ENCODE measurements at regions of chr14 and their contacts with region 1.

Region 1: GRCh38 chr14:96424109-96424989 is 32.4 kb downstream of the AK7 start:
- DNase-seq: peak in 6 of 9 experiments; percentile 13 to 76 (median 38)
- ATAC-seq: peak; percentile 84
- H3K4me3 ChIP-seq: peak overlapping the region; percentile 36 to 38
- H3K4me3 Mint-ChIP-seq: peak overlapping the region; percentile 84
- H3K27ac ChIP-seq: no peak overlapping the region
- H3K27ac Mint-ChIP-seq: no peak overlapping the region
- H3K4me1 ChIP-seq: no peaks in the 10 kb centered on the region
- H3K4me1 Mint-ChIP-seq: peaks cover 3% of the 10 kb centered on the region
- H3K27me3 ChIP-seq: no peaks in the 10 kb centered on the region
- H3K27me3 Mint-ChIP-seq: peaks cover 2% of the 10 kb centered on the region
- CTCF ChIP-seq: peak; percentile 88

Region 2: GRCh38 chr14:95561001-95561412 is 863.3 kb before region 1 on chr14:
- CTCF ChIA-PET with region 1: no interaction called
- POLR2A ChIA-PET with region 1: no interaction called
- intact Hi-C with region 1: loop called in 1 of 2 experiments (anchors 10 kb)
- DNase-seq: peak; percentile 62 to 88 (median 84)
- ATAC-seq: peak; percentile 88
- H3K4me3 ChIP-seq: no peak overlapping the region
- H3K4me3 Mint-ChIP-seq: no peak overlapping the region
- H3K27ac ChIP-seq: no peak overlapping the region
- H3K27ac Mint-ChIP-seq: no peak overlapping the region
- H3K4me1 ChIP-seq: no peaks in the 10 kb centered on the region
- H3K4me1 Mint-ChIP-seq: peaks cover 4% of the 10 kb centered on the region
- H3K27me3 ChIP-seq: no peaks in the 10 kb centered on the region
- H3K27me3 Mint-ChIP-seq: peaks cover 5% of the 10 kb centered on the region
- CTCF ChIP-seq: peak; percentile 86

Region 3: GRCh38 chr14:95850417-95850816 is 573.9 kb before region 1 on chr14:
- CTCF ChIA-PET with region 1: no interaction called
- POLR2A ChIA-PET with region 1: no interaction called
- intact Hi-C with region 1: no loop called
- DNase-seq: no peak
- ATAC-seq: no peak
- H3K4me3 ChIP-seq: no peak overlapping the region
- H3K4me3 Mint-ChIP-seq: no peak overlapping the region
- H3K27ac ChIP-seq: no peak overlapping the region
- H3K27ac Mint-ChIP-seq: no peak overlapping the region
- H3K4me1 ChIP-seq: no peaks in the 10 kb centered on the region
- H3K4me1 Mint-ChIP-seq: no peaks in the 10 kb centered on the region
- H3K27me3 ChIP-seq: no peaks in the 10 kb centered on the region
- H3K27me3 Mint-ChIP-seq: peaks cover 26% of the 10 kb centered on the region
- CTCF ChIP-seq: no peak

Region 4: DNA sequence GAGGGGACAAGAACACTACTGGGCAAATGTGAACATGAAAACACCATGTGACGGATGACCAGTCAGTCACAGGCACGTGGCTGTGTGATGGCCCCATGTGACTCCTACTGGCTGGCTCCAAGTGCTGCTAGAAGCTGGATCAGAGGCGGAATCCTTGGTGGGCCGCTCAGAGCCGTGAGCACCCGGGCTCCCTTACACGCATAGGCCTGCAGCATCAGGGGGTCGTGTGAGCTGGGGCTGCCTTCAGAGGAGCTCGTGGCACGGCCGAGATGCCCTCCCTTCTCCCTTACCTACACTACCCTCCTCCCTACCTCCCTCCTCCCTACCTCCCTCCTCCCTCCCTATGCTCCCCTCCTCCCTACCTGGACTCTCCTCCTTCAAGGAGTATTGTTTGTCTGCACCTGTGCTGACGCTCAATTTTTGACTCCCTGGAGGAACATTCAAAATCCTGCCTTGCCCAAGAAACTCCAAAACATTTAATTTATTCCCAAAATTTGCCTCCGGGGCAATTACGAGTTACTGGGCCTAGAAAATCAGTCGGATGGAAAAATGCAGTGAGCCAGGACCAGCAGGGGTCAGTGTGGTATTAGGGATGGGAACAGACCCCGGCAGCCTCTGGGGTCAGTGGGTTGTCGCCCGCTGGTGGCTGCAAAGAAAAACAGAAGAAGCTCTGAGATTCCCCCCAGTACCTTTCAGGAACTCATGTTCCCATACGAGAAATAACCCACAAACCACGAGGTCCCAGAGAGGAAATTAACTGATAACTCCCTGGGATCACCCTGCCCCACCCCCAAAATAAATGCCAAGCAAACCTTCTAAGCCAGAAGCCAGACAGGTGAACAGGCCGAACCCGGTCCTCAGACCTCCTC is 324.0 kb before region 1 on chr14:
- CTCF ChIA-PET with region 1: interaction called, 3 read pairs
- POLR2A ChIA-PET with region 1: no interaction called
- intact Hi-C with region 1: loop called in 1 of 2 experiments (anchors 1 kb)
- DNase-seq: peak; percentile 44 to 79 (median 66)
- ATAC-seq: peak; percentile 46
- H3K4me3 ChIP-seq: no peak overlapping the region
- H3K4me3 Mint-ChIP-seq: no peak overlapping the region
- H3K27ac ChIP-seq: no peak overlapping the region
- H3K27ac Mint-ChIP-seq: no peak overlapping the region
- H3K4me1 ChIP-seq: no peaks in the 10 kb centered on the region
- H3K4me1 Mint-ChIP-seq: no peaks in the 10 kb centered on the region
- H3K27me3 ChIP-seq: no peaks in the 10 kb centered on the region
- H3K27me3 Mint-ChIP-seq: peaks cover 3% of the 10 kb centered on the region
- CTCF ChIP-seq: peak; percentile 73

Region 5: GRCh38 chr14:96167224-96168148 is 256.9 kb before region 1 on chr14:
- CTCF ChIA-PET with region 1: no interaction called
- POLR2A ChIA-PET with region 1: no interaction called
- intact Hi-C with region 1: no loop called
- DNase-seq: peak in 1 of 9 experiments; percentile 36
- ATAC-seq: no peak
- H3K4me3 ChIP-seq: no peak overlapping the region
- H3K4me3 Mint-ChIP-seq: no peak overlapping the region
- H3K27ac ChIP-seq: no peak overlapping the region
- H3K27ac Mint-ChIP-seq: no peak overlapping the region
- H3K4me1 ChIP-seq: no peaks in the 10 kb centered on the region
- H3K4me1 Mint-ChIP-seq: no peaks in the 10 kb centered on the region
- H3K27me3 ChIP-seq: no peaks in the 10 kb centered on the region
- H3K27me3 Mint-ChIP-seq: peaks cover 2% of the 10 kb centered on the region
- CTCF ChIP-seq: no peak

Region 6: DNA sequence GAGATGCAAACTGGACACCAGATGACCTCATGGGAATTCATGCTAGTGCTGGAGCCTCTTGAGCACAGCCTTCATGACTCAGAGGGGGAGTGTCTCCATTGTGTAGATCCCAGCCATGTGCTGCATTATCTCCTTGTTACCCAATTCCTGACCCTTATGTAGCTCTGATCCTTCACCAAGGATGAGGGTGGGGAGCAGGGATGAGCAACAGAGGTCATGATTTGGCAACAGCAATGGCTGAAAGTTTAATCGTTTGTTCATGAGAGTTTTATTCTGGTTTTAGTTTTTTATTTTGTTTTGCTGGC is 177.9 kb before region 1 on chr14:
- CTCF ChIA-PET with region 1: no interaction called
- POLR2A ChIA-PET with region 1: no interaction called
- intact Hi-C with region 1: no loop called
- DNase-seq: no peak
- ATAC-seq: no peak
- H3K4me3 ChIP-seq: no peak overlapping the region
- H3K4me3 Mint-ChIP-seq: no peak overlapping the region
- H3K27ac ChIP-seq: no peak overlapping the region
- H3K27ac Mint-ChIP-seq: no peak overlapping the region
- H3K4me1 ChIP-seq: no peaks in the 10 kb centered on the region
- H3K4me1 Mint-ChIP-seq: no peaks in the 10 kb centered on the region
- H3K27me3 ChIP-seq: no peaks in the 10 kb centered on the region
- H3K27me3 Mint-ChIP-seq: peaks cover 24% of the 10 kb centered on the region
- CTCF ChIP-seq: no peak

Region 7: DNA sequence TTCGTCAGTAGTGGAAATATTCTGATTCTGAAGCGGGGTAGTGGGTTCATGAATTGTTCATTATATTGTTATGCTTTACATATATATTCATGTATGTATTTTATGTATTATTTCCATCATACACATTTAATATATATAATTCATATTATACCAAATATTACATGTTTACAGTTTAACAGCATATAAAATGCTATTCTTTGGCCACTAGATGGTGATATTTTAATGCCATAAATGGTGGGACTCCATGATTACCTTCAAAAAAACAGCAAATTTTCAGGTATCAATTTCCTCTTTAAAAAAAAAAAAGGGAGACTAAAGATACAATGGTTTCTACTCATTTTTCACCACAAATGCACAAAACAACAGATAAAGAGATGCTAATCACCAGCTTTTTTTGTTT is 127.3 kb before region 1 on chr14:
- CTCF ChIA-PET with region 1: interaction called, 62 read pairs
- POLR2A ChIA-PET with region 1: no interaction called
- intact Hi-C with region 1: loop called (anchors 1 kb)
- DNase-seq: peak in 2 of 9 experiments; percentile 23 to 51
- ATAC-seq: no peak
- H3K4me3 ChIP-seq: no peak overlapping the region
- H3K4me3 Mint-ChIP-seq: no peak overlapping the region
- H3K27ac ChIP-seq: no peak overlapping the region
- H3K27ac Mint-ChIP-seq: no peak overlapping the region
- H3K4me1 ChIP-seq: no peaks in the 10 kb centered on the region
- H3K4me1 Mint-ChIP-seq: no peaks in the 10 kb centered on the region
- H3K27me3 ChIP-seq: no peaks in the 10 kb centered on the region
- H3K27me3 Mint-ChIP-seq: no peaks in the 10 kb centered on the region
- CTCF ChIP-seq: peak; percentile 71

Region 8: GRCh38 chr14:96309896-96310330 is 114.4 kb before region 1 on chr14:
- CTCF ChIA-PET with region 1: interaction called, 13 read pairs
- POLR2A ChIA-PET with region 1: no interaction called
- intact Hi-C with region 1: no loop called
- DNase-seq: peak in 1 of 9 experiments; percentile 9
- ATAC-seq: no peak
- H3K4me3 ChIP-seq: no peak overlapping the region
- H3K4me3 Mint-ChIP-seq: no peak overlapping the region
- H3K27ac ChIP-seq: no peak overlapping the region
- H3K27ac Mint-ChIP-seq: no peak overlapping the region
- H3K4me1 ChIP-seq: no peaks in the 10 kb centered on the region
- H3K4me1 Mint-ChIP-seq: no peaks in the 10 kb centered on the region
- H3K27me3 ChIP-seq: no peaks in the 10 kb centered on the region
- H3K27me3 Mint-ChIP-seq: no peaks in the 10 kb centered on the region
- CTCF ChIP-seq: no peak

Region 9: DNA sequence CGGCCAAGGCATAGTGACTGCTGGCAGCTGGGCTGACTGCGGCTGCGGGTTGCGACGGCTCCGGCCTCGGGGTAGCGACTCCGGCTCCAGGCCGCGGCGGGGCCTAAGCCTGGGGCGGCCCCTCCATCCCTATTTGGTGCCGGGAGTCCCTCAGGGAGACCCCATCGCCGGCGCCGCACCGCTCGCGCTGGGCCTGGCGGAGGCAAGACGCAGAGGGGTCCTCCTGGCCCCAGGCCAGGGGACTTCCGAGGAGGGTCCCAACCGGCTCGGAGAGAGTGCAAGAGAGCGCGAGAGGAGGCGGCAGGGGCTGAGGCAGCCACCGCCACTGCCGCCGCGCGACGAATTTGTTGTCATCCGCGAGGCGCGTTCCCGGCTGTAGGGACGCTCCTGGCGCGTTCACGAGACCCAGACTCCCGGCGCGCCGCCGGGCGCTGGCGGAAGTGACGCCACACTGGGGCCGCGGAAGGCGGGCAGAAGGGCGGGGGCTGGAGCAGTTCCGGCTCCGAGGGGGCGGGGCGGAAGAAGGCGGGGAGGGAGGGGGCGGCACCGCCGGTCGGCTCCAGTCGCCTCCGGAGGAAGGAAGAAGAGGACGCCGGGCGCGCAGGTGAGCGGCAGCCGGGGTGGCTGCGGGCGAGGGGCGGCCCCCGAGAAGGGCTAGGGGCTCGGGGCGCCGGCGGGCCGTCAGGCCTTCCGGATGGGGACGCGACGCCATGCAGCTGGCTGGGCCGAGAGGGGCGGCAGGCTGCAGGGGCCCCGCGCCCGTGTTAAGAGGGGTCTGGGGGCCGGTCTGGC is 61.2 kb before region 1 on chr14 and contains the starts of genes ATG2B and GSKIP:
- CTCF ChIA-PET with region 1: no interaction called
- POLR2A ChIA-PET with region 1: no interaction called
- intact Hi-C with region 1: loop called (anchors 1 to 5 kb)
- DNase-seq: peak; percentile 95 to 99 (median 98)
- ATAC-seq: peak; percentile 84
- H3K4me3 ChIP-seq: peak within 1 kb of the TSS; percentile 87 to 97
- H3K4me3 Mint-ChIP-seq: peak within 1 kb of the TSS; percentile 89
- H3K27ac ChIP-seq: peak within 1 kb of the TSS; percentile 89 to 93
- H3K27ac Mint-ChIP-seq: peak within 1 kb of the TSS; percentile 89
- H3K4me1 ChIP-seq: peaks cover 28% of the 10 kb centered on the region
- H3K4me1 Mint-ChIP-seq: peaks cover 59% of the 10 kb centered on the region
- H3K27me3 ChIP-seq: no peaks in the 10 kb centered on the region
- H3K27me3 Mint-ChIP-seq: no peaks in the 10 kb centered on the region
- CTCF ChIP-seq: no peak
- total RNA-seq, gene ATG2B: 16.0 to 17.9 TPM
- total RNA-seq, gene GSKIP: 9.4 to 13.5 TPM